ENCODE measurements at regions of chr20 and their contacts with region 1.

Region 1: GRCh38 chr20:41028348-41029148 is at the start of gene TOP1:
- DNase-seq: peak; percentile 100
- H3K4me3 Mint-ChIP-seq: peak within 1 kb of the TSS; percentile 86
- H3K27ac Mint-ChIP-seq: peak within 1 kb of the TSS; percentile 90
- H3K4me1 Mint-ChIP-seq: peaks cover 42% of the 10 kb centered on the region
- H3K27me3 Mint-ChIP-seq: no peaks in the 10 kb centered on the region
- total RNA-seq, gene TOP1: 91.7 to 92.6 TPM

Region 2: DNA sequence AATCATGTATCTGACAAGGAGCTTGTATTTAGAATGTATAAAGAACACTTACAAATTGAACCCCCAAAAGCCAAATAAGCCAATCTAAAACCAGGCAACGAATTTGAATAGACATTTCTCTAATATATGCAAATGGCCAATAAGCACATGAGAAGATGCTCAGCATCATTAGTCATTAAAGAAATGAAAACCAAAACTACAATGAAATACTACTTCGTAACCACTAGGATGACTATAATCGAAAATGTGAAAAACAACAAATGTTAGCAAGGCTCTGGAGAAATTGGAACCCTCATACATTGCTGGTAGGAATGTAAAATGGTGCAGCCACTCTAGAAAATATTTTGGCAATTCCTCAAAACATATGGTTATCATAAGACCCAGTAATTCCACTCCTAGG is 105.7 kb before region 1 on chr20:
- CTCF ChIA-PET with region 1: no interaction called
- intact Hi-C with region 1: no loop called
- DNase-seq: no peak
- H3K4me3 Mint-ChIP-seq: no peak overlapping the region
- H3K27ac Mint-ChIP-seq: no peak overlapping the region
- H3K4me1 Mint-ChIP-seq: no peaks in the 10 kb centered on the region
- H3K27me3 Mint-ChIP-seq: peaks cover 3% of the 10 kb centered on the region

Region 3: GRCh38 chr20:41003143-41003883 is 25.2 kb before region 1 on chr20:
- CTCF ChIA-PET with region 1: interaction called, 3 read pairs
- intact Hi-C with region 1: loop called (anchors 1 kb)
- DNase-seq: peak; percentile 77
- H3K4me3 Mint-ChIP-seq: peak overlapping the region; percentile 45
- H3K27ac Mint-ChIP-seq: peak overlapping the region; percentile 90
- H3K4me1 Mint-ChIP-seq: peaks cover 22% of the 10 kb centered on the region
- H3K27me3 Mint-ChIP-seq: no peaks in the 10 kb centered on the region

Region 4: DNA sequence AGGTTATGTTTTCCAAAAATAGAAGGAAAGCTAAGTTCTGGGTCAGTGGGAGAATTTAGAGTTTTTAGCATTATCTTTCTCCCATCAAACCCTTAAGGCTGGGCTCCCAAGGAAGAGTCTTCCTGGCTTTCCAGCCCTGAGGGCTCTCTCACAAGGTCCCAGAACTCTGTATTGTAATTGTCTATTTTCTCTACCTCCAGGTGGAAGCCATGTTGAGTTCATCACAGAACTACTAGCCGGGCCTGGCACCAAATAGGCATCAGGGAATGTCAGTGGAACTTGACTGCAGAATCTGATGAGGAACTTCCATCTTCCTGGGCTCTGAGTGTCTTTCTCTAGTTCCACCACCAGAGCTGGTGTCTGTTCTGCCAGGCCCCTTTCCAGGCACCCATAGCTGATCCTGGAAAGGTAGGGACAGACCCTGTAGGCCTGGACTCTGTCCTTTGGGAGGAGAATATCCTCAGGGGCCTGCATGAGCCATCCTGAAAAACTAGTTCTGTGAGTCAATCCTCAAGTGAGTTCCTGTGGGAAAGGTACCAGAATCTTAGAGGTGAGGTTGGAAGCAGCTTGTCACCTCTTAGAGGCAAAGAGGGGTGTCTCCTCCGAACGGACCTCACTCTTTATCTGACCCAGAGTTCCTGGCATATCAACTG is 11.0 kb before region 1 on chr20:
- CTCF ChIA-PET with region 1: no interaction called
- intact Hi-C with region 1: no loop called
- DNase-seq: no peak
- H3K4me3 Mint-ChIP-seq: no peak overlapping the region
- H3K27ac Mint-ChIP-seq: no peak overlapping the region
- H3K4me1 Mint-ChIP-seq: peaks cover 5% of the 10 kb centered on the region
- H3K27me3 Mint-ChIP-seq: no peaks in the 10 kb centered on the region

Region 5: DNA sequence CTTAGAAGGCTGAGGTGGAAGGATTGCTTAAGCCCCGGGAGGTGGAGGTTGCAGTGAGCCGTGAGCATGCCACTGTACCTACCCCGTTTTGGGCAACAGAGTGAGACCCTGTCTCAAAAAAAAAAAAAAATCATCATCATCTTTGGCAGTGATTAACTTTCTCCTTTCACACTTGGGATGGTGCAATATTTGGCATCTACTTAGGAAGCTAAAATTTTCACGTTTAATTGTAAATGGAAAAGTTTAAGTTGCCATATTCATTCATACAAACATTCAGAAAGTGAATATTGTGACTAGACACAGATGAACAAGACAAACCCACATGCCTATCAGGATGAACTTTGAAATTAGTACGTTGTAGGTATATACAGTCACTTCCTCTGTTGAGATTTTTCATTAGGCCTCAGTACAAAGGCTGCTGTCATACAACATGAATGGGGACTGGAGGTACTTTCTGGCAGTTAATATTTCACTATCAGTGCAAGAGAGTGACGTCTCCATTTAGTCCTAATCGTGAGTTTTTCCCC is 10.4 kb after region 1 on chr20:
- CTCF ChIA-PET with region 1: no interaction called
- intact Hi-C with region 1: loop called (anchors 1 kb)
- DNase-seq: no peak
- H3K4me3 Mint-ChIP-seq: no peak overlapping the region
- H3K27ac Mint-ChIP-seq: peak overlapping the region; percentile 73
- H3K4me1 Mint-ChIP-seq: peaks cover 93% of the 10 kb centered on the region
- H3K27me3 Mint-ChIP-seq: no peaks in the 10 kb centered on the region

Region 6: GRCh38 chr20:41047975-41048305 is 19.4 kb after region 1 on chr20:
- CTCF ChIA-PET with region 1: interaction called, 4 read pairs
- intact Hi-C with region 1: loop called (anchors 1 kb)
- DNase-seq: no peak
- H3K4me3 Mint-ChIP-seq: peak overlapping the region; percentile 71
- H3K27ac Mint-ChIP-seq: peak overlapping the region; percentile 92
- H3K4me1 Mint-ChIP-seq: peaks cover 84% of the 10 kb centered on the region
- H3K27me3 Mint-ChIP-seq: no peaks in the 10 kb centered on the region

Region 7: GRCh38 chr20:41078329-41078728 is 49.8 kb after region 1 on chr20:
- CTCF ChIA-PET with region 1: no interaction called
- intact Hi-C with region 1: loop called (anchors 1 kb)
- DNase-seq: no peak
- H3K4me3 Mint-ChIP-seq: no peak overlapping the region
- H3K27ac Mint-ChIP-seq: peak overlapping the region; percentile 30
- H3K4me1 Mint-ChIP-seq: peaks cover 48% of the 10 kb centered on the region
- H3K27me3 Mint-ChIP-seq: no peaks in the 10 kb centered on the region

Region 8: GRCh38 chr20:41095110-41095969 is 66.8 kb after region 1 on chr20:
- CTCF ChIA-PET with region 1: interaction called, 4 read pairs
- intact Hi-C with region 1: loop called (anchors 1 kb)
- DNase-seq: peak; percentile 70
- H3K4me3 Mint-ChIP-seq: no peak overlapping the region
- H3K27ac Mint-ChIP-seq: peak overlapping the region; percentile 61
- H3K4me1 Mint-ChIP-seq: peaks cover 14% of the 10 kb centered on the region
- H3K27me3 Mint-ChIP-seq: no peaks in the 10 kb centered on the region

Region 9: GRCh38 chr20:41317536-41318270 is 289.2 kb after region 1 on chr20 and contains the start of gene ZHX3:
- CTCF ChIA-PET with region 1: no interaction called
- intact Hi-C with region 1: loop called (anchors 5 kb)
- DNase-seq: peak; percentile 94
- H3K4me3 Mint-ChIP-seq: peak within 1 kb of the TSS; percentile 85
- H3K27ac Mint-ChIP-seq: peak within 1 kb of the TSS; percentile 65
- H3K4me1 Mint-ChIP-seq: peaks cover 29% of the 10 kb centered on the region
- H3K27me3 Mint-ChIP-seq: no peaks in the 10 kb centered on the region
- total RNA-seq, gene ZHX3: 9.4 to 9.9 TPM

Region 10: DNA sequence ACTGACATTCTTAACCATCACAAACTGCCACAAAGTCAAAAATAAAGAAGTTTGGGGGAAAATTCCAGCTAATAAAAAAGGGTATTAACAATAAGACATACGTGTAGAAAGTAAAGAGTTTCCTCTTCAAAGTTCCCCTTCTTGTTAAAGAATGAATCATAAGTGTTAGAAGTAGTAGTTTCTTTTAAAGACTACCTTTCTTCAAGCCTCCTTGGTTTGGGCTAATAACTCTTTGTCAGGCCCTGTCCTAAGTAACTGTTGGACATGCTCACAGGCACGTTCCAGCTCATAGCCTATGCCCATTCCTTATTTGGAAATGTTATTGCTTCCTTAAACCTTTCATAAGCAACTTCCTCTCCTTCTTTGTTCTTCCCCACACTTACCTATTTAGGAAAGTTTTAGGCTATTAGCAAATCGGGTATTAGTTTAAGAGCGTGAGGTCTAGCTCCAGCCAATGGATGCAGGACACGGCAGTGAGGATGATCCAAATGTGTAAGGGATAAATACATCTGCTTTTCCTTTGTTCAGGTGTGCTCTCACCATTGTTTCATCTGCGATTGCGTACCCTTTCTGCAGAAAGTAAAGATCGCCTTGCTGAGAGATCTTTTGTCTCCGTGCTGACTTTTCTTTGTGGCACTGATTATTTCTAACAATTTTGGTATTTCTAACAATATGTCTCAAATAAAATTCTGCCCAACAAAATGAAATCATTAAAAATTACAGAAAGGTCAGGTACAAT is 524.8 kb after region 1 on chr20:
- CTCF ChIA-PET with region 1: no interaction called
- intact Hi-C with region 1: no loop called
- DNase-seq: no peak
- H3K4me3 Mint-ChIP-seq: no peak overlapping the region
- H3K27ac Mint-ChIP-seq: no peak overlapping the region
- H3K4me1 Mint-ChIP-seq: peaks cover 22% of the 10 kb centered on the region
- H3K27me3 Mint-ChIP-seq: no peaks in the 10 kb centered on the region